ENCODE measurements at regions of chrX and their contacts with region 1.

Region 1: GRCh38 chrX:22237479-22237878 is 35.2 kb upstream of the CBLL2 start:
- DNase-seq: no peak
- H3K4me3 ChIP-seq: no peak overlapping the region
- H3K27ac ChIP-seq: no peak overlapping the region
- H3K4me1 ChIP-seq: no peaks in the 10 kb centered on the region
- H3K27me3 ChIP-seq: no peaks in the 10 kb centered on the region
- CTCF ChIP-seq: no peak
- EP300 ChIP-seq: no peak
- POLR2A ChIP-seq: no peak

Region 2: DNA sequence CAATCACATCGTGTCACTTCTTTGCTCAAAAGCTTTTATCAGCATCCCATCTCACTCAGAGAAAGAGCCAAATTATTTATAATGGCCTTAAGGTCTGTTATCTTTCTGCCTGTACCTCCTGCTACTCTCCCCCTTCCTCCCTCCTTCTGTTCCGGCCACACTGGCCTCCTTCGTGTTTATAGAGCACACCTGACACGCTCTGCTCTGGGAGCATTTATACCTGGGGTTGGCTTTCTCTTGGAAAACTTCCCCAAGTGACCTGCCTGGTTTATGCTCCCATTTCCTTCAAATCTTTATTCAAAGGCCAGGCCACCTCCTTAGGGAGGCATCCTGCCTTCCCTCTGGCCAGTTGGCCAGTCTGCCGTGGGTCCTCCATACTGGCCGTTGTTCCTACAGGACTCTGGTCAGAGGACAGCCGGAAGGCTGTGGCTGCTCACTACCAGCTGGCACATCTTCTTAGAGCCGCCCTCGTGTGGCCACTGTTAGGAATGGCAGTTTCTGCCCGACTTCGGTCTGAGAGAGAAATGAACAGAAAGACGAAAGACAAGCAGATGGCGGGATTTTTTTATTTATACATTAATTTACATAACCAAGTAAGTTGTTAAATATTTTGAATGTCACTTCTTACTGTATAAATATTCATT is 44.9 kb before region 1 on chrX:
- in situ Hi-C with region 1: no loop called
- intact Hi-C with region 1: no loop called
- DNase-seq: peak; percentile 64
- H3K4me3 ChIP-seq: no peak overlapping the region
- H3K27ac ChIP-seq: no peak overlapping the region
- H3K4me1 ChIP-seq: no peaks in the 10 kb centered on the region
- H3K27me3 ChIP-seq: no peaks in the 10 kb centered on the region
- CTCF ChIP-seq: peak; percentile 55 to 81 (median 60)
- EP300 ChIP-seq: no peak
- POLR2A ChIP-seq: no peak

Region 3: GRCh38 chrX:22220941-22221340 is 16.5 kb before region 1 on chrX:
- in situ Hi-C with region 1: no loop called
- intact Hi-C with region 1: loop called (anchors 1 kb)
- DNase-seq: no peak
- H3K4me3 ChIP-seq: no peak overlapping the region
- H3K27ac ChIP-seq: no peak overlapping the region
- H3K4me1 ChIP-seq: no peaks in the 10 kb centered on the region
- H3K27me3 ChIP-seq: no peaks in the 10 kb centered on the region
- CTCF ChIP-seq: no peak
- EP300 ChIP-seq: no peak
- POLR2A ChIP-seq: no peak